GM10248 (cell line): ENCODE measurements at regions of chr10 and their contacts with region 1.

Region 1: GRCh38 chr10:73529089-73529832 is 33.4 kb upstream of the PPP3CB start:
- DNase-seq: peak; percentile 82
- CTCF ChIP-seq: peak; percentile 75

Region 2: DNA sequence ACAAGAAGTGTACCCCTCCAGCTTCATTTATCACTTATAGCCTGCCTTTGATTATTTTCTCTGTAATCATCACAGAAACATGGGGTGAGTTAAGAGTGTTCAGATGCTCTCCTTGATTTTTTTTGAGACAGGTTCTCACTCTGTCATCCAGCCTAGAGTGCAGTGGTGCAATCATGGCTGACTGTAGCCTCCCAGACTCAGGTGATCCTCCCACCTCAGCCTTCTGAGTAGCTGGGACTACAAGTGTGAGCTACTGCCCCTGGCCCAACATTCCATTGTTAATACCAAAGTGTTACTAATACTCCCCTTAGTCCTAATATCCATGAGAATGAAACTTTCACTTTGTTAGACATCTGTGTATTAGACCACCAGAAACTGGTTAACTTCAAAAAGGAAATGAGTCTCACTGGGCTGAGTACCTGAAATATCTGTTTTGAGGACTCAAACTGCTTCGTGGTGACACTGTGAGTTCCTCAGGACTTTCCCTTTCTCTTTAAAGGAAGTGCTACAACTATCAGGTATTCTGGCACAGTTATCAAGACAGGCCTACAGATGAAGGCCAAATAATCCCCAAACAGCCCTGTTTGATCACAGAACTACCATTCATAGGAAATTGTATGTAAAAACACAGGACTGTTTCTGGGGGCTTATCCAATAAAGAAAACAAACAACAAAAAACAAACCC is 150.1 kb before region 1 on chr10:
- CTCF ChIA-PET with region 1: no interaction called
- POLR2A ChIA-PET with region 1: no interaction called
- DNase-seq: peak; percentile 24
- CTCF ChIP-seq: no peak

Region 3: DNA sequence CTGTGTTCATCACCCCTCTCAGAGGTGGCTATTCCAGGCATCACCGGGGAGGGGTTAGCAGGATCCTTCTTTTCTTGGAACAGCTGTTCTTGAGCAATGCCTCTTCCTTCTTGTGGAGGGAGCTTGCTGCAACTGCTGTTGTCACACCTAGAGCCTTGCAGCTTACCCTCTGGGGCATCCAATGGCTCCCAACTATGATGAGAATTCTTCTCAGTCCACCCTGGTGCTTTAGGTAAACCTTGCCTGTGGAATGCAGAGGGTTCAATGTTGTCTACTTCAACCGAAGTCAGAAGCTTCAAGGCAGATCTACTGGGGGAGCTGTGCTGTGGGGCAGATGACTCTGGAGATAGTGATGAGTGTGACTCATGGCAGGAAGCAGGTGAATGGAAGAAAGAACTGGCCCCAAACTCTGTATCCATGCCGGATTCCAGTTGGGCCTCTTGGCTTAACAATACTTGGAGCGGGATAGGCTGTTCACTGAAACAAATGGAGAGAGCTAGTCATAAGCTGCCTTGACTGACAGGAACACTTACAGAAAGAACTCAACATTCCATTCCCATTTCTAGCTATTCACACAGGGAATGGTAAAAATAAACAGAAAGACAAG is 11.9 kb before region 1 on chr10:
- CTCF ChIA-PET with region 1: interaction called, 71 read pairs
- POLR2A ChIA-PET with region 1: no interaction called
- DNase-seq: no peak
- CTCF ChIP-seq: no peak

Region 4: DNA sequence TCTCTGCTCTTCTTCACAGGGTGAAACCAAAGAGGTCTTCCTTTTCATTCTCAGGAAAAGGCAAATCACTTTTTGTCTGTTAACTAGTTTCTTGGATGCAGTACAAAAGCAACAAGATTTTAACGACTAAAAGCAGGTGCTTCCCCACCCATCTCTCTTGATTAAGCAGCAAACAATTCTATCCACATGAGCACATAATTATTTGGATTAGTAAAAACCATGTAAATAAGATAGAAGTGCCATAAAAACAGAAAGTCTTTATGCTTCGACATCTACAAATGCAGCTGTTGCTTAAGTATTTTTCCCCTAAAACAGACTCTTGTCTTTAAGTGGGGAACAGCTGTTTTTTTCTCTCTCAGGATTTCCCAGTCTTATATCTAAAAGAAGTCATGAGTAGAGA is 24.5 kb after region 1 on chr10:
- CTCF ChIA-PET with region 1: interaction called, 10 read pairs
- POLR2A ChIA-PET with region 1: no interaction called
- DNase-seq: no peak
- CTCF ChIP-seq: no peak

Region 5: DNA sequence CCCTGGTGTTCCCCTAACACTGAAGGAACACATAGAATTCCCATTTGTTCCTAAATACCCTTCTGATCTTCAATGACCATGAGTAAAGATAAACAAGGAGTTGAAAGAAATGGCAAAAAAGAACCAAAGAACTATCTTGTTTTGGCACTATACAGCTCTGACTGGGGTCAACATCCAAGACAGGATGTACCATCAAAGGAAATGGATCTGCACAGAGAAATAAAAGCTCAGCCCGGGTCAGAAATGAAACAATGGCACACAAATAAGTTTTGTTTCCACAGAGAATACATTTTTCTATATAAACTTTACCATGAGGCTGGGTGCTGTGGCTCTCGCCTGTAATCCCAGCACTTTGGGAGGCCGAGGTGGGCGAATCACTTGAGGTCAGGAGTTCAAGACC is 79.9 kb after region 1 on chr10:
- CTCF ChIA-PET with region 1: interaction called, 22 read pairs
- POLR2A ChIA-PET with region 1: no interaction called
- DNase-seq: no peak
- CTCF ChIP-seq: no peak

Region 6: GRCh38 chr10:73634421-73634820 is 105.2 kb after region 1 on chr10:
- CTCF ChIA-PET with region 1: interaction called, 13 read pairs
- POLR2A ChIA-PET with region 1: no interaction called
- DNase-seq: no peak
- CTCF ChIP-seq: no peak

Region 7: DNA sequence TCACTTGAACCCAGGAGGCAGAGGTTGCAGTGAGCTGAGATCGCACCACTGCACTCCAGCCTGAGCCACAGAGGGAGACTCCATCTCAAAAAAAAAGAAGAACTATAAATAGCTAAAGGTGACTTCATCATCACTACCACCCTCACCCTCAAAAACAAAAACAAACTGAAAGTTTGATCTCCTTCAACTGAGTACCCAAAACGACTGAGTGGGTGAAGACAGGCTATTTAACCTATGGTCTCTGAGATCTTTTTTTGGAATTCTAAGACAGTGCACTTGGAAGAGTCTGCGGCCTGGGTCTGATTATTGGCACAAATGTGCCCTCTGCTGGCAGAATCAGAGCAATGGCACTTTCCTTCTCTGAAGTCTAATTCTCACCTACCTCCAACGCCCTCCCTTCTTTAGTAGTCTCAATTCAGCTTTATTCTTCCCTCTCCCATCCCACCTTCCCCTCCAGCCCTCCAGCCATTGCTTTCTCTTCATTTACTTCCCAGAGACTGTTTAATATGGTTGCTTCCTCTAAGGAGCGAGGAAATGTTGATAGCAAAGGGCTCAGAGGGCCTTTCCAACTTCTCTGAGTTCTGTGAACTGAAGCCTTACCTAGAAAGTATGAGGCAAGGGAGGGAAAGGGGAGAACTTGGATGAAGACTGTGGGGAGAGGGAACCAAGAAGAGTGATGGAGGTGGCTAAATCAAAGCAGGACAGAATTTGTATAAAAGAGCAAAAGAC is 114.9 kb after region 1 on chr10:
- CTCF ChIA-PET with region 1: interaction called, 180 read pairs
- POLR2A ChIA-PET with region 1: no interaction called
- DNase-seq: peak; percentile 74
- CTCF ChIP-seq: peak; percentile 90